ENCODE measurements at regions of chr2 and their contacts with region 1.

Region 1: DNA sequence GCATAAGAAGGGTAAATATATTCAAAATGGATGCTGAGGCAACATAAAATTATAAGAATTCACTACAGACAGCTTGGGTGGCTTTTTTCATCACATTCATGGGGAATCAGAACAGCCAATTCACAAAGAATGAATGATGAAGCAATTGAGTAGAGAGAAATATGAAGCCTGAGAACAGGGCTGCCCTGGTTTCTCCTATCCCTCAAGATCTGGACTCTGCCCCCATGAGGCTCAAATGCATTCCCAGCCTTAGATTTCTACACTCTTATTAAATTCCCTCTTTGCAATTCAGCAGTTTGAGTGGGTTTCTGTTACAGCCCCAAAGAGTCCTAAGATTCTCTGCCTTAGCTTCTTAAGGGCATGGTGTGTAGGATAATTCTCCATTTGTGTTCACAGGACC is 172.5 kb downstream of the MAIP1 start:
- DNase-seq: peak; percentile 68
- ATAC-seq: peak; percentile 70
- H3K4me3 ChIP-seq: no peak overlapping the region
- H3K27ac ChIP-seq: no peak overlapping the region
- H3K4me1 ChIP-seq: peaks cover 70% of the 10 kb centered on the region
- H3K27me3 ChIP-seq: no peaks in the 10 kb centered on the region
- CTCF ChIP-seq: no peak
- EP300 ChIP-seq: no peak
- POLR2A ChIP-seq: no peak
- RAD21 ChIP-seq: no peak

Region 2: DNA sequence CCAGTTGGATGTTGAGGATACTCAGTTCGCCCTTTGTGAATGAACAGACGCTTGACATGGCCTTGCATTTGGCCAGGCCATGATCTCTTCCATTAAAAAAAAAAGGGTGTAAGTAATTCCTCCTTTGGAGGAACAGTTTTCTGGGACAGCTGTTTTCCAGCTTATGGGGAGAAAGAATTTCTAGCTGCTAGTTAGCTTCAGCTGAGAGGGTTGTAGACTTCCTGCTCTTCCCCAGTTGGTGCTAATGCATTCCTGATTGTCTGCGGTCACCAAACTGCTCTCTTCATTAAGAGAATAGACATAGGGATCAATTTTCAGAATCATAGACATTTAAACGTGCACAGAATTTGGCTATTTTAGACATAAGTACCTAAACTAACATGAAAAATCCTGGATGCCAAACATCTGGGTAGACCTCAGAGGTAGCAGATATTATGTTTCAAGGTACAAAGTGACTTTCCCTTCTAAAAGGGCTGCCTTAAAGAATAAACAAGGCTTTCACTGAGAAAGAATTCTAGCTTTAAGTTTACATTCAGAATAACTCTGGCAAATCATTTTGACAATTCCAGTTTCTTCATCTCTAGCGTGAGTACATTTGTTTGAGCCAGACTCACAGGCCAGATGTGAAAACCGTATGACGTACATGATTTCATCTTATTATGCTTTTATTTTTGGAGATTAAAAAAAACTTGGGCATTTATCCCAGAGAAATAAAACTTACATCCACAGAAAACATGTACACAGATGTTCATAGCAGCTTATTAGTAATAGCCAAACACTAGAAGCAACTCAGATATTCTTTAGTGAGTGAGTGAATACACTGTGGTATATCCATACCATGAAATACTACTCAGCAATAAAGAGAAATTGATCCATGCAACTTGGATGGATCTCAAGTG is 101.3 kb before region 1 on chr2:
- CTCF ChIA-PET with region 1: no interaction called
- POLR2A ChIA-PET with region 1: no interaction called
- in situ Hi-C with region 1: no loop called
- intact Hi-C with region 1: no loop called
- DNase-seq: no peak
- ATAC-seq: no peak
- H3K4me3 ChIP-seq: no peak overlapping the region
- H3K27ac ChIP-seq: no peak overlapping the region
- H3K4me1 ChIP-seq: no peaks in the 10 kb centered on the region
- H3K27me3 ChIP-seq: peaks cover 0 to 11% of the 10 kb centered on the region in 2 experiments; a peak in 1 of 5 replicates
- CTCF ChIP-seq: no peak
- EP300 ChIP-seq: no peak
- POLR2A ChIP-seq: no peak
- RAD21 ChIP-seq: no peak

Region 3: DNA sequence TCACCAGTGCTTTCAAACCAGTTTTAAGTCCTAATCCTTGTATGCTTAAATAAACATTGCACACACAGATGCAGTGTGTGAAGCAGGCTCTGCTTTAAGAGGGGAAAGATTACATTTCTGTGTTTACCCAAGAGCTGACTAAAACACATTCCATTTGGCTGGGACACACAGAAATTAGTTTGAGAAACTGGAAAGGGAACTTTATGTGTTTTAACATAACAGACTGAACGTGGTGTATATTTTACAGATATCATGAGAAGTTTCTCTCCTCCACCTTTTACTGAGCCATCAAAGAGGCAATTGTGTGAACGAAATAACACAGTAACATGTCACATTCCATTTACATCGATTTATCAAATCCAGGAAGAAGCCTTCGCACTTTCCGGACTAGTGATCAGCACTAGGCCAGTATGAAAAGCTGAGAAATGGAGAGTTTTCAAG is 50.6 kb before region 1 on chr2:
- CTCF ChIA-PET with region 1: no interaction called
- POLR2A ChIA-PET with region 1: no interaction called
- in situ Hi-C with region 1: no loop called
- intact Hi-C with region 1: loop called (anchors 5 kb)
- DNase-seq: peak; percentile 92
- ATAC-seq: peak; percentile 100
- H3K4me3 ChIP-seq: peak overlapping the region; percentile 30 to 54 (median 45); a peak in 4 of 6 replicates
- H3K27ac ChIP-seq: peak overlapping the region; percentile 68
- H3K4me1 ChIP-seq: peaks cover 24% of the 10 kb centered on the region
- H3K27me3 ChIP-seq: peaks cover 0 to 20% of the 10 kb centered on the region in 2 experiments; a peak in 3 of 5 replicates
- CTCF ChIP-seq: no peak
- EP300 ChIP-seq: peak in 1 of 2 experiments; percentile 89; a peak in 2 of 4 replicates
- POLR2A ChIP-seq: no peak
- RAD21 ChIP-seq: no peak

Measured in HepG2 (cell line).